ENCODE measurements at regions of chr1 and their contacts with region 1.

Region 1: DNA sequence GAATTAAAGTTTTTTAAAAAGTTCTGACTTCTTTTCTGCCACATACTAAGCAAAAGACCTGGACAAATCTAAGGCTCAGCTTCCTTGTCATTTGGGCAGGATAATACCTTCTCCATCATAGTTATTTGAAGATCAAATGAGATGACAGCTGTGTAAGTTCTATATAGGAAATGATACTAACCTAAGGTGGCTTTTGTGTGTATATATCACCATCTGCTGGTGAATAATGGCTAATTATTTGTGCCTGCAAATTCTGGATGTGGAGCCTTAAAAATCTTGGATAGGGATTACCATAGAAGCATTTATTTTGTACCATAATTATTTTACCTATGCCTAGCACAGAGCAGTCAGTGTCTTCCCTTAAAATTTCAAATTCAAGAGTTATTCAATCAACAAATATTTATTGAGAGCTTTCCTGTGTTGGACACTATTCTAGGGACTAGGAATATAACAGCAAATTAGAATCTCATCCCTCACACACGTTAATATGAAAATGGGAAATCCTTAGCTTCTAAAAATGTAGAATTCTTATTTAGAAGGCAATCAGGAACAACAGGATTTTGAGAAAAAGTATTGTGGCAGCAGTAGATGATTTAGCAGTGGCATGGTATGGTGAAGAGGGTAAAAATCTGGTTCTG is 89.8 kb downstream of the TMEM200B start:
- DNase-seq: no peak
- H3K4me3 ChIP-seq: no peak overlapping the region
- H3K27ac ChIP-seq: no peak overlapping the region
- H3K27me3 ChIP-seq: no peaks in the 10 kb centered on the region
- CTCF ChIP-seq: peak; percentile 41 to 93 (median 77)

Region 2: DNA sequence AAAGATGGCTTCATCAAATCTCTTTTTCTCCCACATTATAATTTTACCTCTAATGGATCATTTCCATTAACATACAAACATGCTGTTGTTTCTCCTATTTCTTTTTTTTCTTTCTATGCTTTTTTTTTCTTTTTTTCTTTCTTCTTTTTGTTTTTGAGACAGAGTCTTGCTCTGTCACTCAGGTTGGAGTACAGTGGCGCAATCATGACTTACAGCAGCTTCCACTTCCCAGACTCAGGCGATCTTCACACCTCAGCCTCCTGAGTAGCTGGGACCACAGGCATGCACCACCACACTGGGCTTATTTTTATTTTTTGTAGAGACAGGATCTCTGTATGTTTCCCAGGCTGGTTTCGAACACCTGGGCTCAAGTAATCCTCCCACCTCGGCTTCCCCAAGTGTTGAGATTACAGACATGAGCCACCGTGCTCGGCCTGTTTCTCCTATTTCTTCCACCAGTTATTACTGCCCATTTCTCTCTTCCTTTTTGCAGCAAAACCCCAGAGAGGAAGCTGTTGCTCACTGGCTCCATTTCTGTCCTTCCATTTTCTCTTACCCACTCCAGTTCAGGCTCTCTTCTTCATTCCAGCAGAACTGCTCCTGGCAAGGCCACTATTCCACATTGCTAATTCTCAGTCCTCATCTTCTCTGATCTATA is 254.1 kb before region 1 on chr1:
- intact Hi-C with region 1: loop called in 1 of 2 experiments (anchors 10 kb)
- DNase-seq: no peak
- H3K4me3 ChIP-seq: no peak overlapping the region
- H3K27ac ChIP-seq: no peak overlapping the region
- H3K27me3 ChIP-seq: no peaks in the 10 kb centered on the region
- CTCF ChIP-seq: no peak

Region 3: DNA sequence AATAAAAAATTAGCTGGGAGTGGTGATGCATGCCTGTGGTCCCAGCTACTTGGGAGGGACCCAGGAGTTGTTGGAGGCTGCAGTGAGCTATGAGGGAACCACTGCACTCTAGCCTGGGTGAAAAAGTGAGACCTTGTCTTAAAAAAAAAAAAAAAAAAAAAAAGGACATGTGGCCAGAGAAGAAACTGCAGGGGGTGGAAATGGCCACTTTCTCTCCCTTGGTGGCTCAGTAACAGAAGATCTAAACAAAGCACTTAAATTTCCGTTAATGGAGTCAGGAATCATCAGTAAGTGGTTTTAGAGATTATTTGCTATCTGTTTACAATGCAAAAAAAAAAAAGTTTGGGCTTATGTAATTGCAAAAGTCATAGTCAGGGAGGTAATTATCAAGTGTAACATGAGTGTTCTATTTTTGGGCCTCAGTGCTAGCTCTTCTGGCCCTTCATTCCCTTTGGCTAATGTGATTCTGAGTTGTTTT is 241.3 kb before region 1 on chr1:
- intact Hi-C with region 1: loop called (anchors 5 to 10 kb)
- DNase-seq: no peak
- H3K4me3 ChIP-seq: no peak overlapping the region
- H3K27ac ChIP-seq: no peak overlapping the region
- H3K27me3 ChIP-seq: no peaks in the 10 kb centered on the region
- CTCF ChIP-seq: peak in 9 of 56 donors; percentile 5 to 35 (median 18)

Region 4: GRCh38 chr1:29312469-29313466 is 278.8 kb after region 1 on chr1:
- intact Hi-C with region 1: no loop called
- DNase-seq: peak in 2 of 10 donors; percentile 9 to 22
- H3K4me3 ChIP-seq: no peak overlapping the region
- H3K27ac ChIP-seq: no peak overlapping the region
- H3K27me3 ChIP-seq: no peaks in the 10 kb centered on the region
- CTCF ChIP-seq: peak in 2 of 56 donors; percentile 5 to 17

Measured in dorsolateral prefrontal cortex (tissue), 120 donors.